SK-N-SH (cell line): ENCODE measurements at regions of chr1 and their contacts with region 1.

Region 1: GRCh38 chr1:155172732-155173477 is at the start of gene KRTCAP2:
- DNase-seq: peak; percentile 94
- H3K4me3 ChIP-seq: peak within 1 kb of the TSS; percentile 75 to 93
- H3K27ac ChIP-seq: peak within 1 kb of the TSS; percentile 92
- H3K4me1 ChIP-seq: peaks cover 0 to 33% of the 10 kb centered on the region in 2 experiments; a peak in 3 of 4 replicates
- H3K27me3 ChIP-seq: no peaks in the 10 kb centered on the region
- CTCF ChIP-seq: peak; percentile 91
- EP300 ChIP-seq: no peak
- RAD21 ChIP-seq: no peak
- polyA plus RNA-seq, gene KRTCAP2: 203 and 238 TPM in 2 replicates

Region 2: GRCh38 chr1:155063550-155064110 is 109.3 kb before region 1 on chr1 and contains the start of gene EFNA4:
- CTCF ChIA-PET with region 1: interaction called, 10 read pairs
- POLR2A ChIA-PET with region 1: no interaction called
- DNase-seq: peak; percentile 95
- H3K4me3 ChIP-seq: peak within 1 kb of the TSS; percentile 79 to 92
- H3K27ac ChIP-seq: peak within 1 kb of the TSS; percentile 83 to 85
- H3K4me1 ChIP-seq: peaks cover 0 to 25% of the 10 kb centered on the region in 2 experiments; a peak in 2 of 4 replicates
- H3K27me3 ChIP-seq: no peaks in the 10 kb centered on the region
- CTCF ChIP-seq: no peak
- EP300 ChIP-seq: no peak
- RAD21 ChIP-seq: no peak
- polyA plus RNA-seq, gene EFNA4: 15.9 and 17.7 TPM in 2 replicates

Region 3: GRCh38 chr1:155084722-155085503 is 88.0 kb before region 1 on chr1:
- CTCF ChIA-PET with region 1: interaction called, 496 read pairs
- POLR2A ChIA-PET with region 1: interaction called, 4 read pairs
- DNase-seq: peak; percentile 94
- H3K4me3 ChIP-seq: peak overlapping the region; percentile 77 to 79
- H3K27ac ChIP-seq: peak overlapping the region; percentile 69 to 94
- H3K4me1 ChIP-seq: peaks cover 13 to 26% of the 10 kb centered on the region in 2 experiments; a peak in 3 of 4 replicates
- H3K27me3 ChIP-seq: peaks cover 15% of the 10 kb centered on the region
- CTCF ChIP-seq: peak; percentile 82
- EP300 ChIP-seq: peak in 1 of 2 experiments; percentile 26; a peak in 1 of 4 replicates
- RAD21 ChIP-seq: peak; percentile 96

Region 4: GRCh38 chr1:155135415-155136028 is 37.4 kb before region 1 on chr1 and contains the start of gene SLC50A1:
- CTCF ChIA-PET with region 1: interaction called, 67 read pairs
- POLR2A ChIA-PET with region 1: interaction called, 5 read pairs
- DNase-seq: peak; percentile 97
- H3K4me3 ChIP-seq: peak within 1 kb of the TSS; percentile 72 to 73
- H3K27ac ChIP-seq: peak within 1 kb of the TSS; percentile 96 to 98
- H3K4me1 ChIP-seq: peaks cover 6 to 38% of the 10 kb centered on the region in 2 experiments; a peak in 3 of 4 replicates
- H3K27me3 ChIP-seq: no peaks in the 10 kb centered on the region
- CTCF ChIP-seq: no peak; the same call in 1 of the 2 replicates
- EP300 ChIP-seq: no peak; a peak in 1 of 4 replicates
- RAD21 ChIP-seq: no peak
- polyA plus RNA-seq, gene SLC50A1: 58.4 and 71.1 TPM in 2 replicates

Region 5: GRCh38 chr1:155193275-155193990 is 20.5 kb after region 1 on chr1:
- CTCF ChIA-PET with region 1: interaction called, 203 read pairs
- POLR2A ChIA-PET with region 1: interaction called, 27 read pairs
- DNase-seq: peak; percentile 94
- H3K4me3 ChIP-seq: peak overlapping the region; percentile 30 to 60
- H3K27ac ChIP-seq: peak overlapping the region; percentile 78 to 86
- H3K4me1 ChIP-seq: peaks cover 0 to 24% of the 10 kb centered on the region in 2 experiments; a peak in 2 of 4 replicates
- H3K27me3 ChIP-seq: no peaks in the 10 kb centered on the region
- CTCF ChIP-seq: peak; percentile 97
- EP300 ChIP-seq: no peak
- RAD21 ChIP-seq: peak; percentile 64

Region 6: GRCh38 chr1:155227261-155228095 is 54.6 kb after region 1 on chr1:
- CTCF ChIA-PET with region 1: interaction called, 36 read pairs
- POLR2A ChIA-PET with region 1: no interaction called
- DNase-seq: peak; percentile 97
- H3K4me3 ChIP-seq: peak overlapping the region; percentile 60 to 69
- H3K27ac ChIP-seq: peak overlapping the region; percentile 86 to 93
- H3K4me1 ChIP-seq: peaks cover 12 to 14% of the 10 kb centered on the region in 2 experiments; a peak in 3 of 4 replicates
- H3K27me3 ChIP-seq: no peaks in the 10 kb centered on the region
- CTCF ChIP-seq: no peak
- EP300 ChIP-seq: no peak
- RAD21 ChIP-seq: no peak